ENCODE measurements at regions of chr18 and their contacts with region 1.

Region 1: DNA sequence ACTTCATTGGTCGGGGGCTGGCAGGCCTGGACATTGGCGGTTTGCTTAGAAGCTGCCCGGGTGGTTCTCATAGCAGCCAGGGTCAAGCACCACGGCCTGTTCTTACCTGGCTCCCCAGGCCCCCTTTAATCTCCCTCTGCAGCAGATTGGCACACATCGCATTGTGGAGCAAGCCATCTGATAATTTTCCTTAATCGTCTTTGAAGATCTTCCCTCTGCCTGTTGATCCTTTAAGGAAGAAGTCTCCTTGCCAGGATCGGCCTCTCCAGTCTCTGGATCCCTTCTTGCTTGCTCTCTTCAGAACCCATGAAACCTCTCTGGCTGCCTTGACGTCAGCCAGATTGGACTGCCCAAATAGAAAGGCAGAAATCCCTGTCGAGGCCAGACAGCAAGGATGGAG is 75.8 kb downstream of the NEDD4L start:
- DNase-seq: no peak
- H3K4me3 ChIP-seq: no peak overlapping the region
- H3K27ac ChIP-seq: peak overlapping the region; percentile 13 to 17
- H3K4me1 ChIP-seq: no peaks in the 10 kb centered on the region
- H3K27me3 ChIP-seq: no peaks in the 10 kb centered on the region
- CTCF ChIP-seq: no peak
- POLR2A ChIP-seq: no peak

Region 2: GRCh38 chr18:58043491-58044379 is 76.1 kb before region 1 on chr18 and contains the start of gene NEDD4L:
- intact Hi-C with region 1: loop called (anchors 2 kb)
- DNase-seq: peak; percentile 80 to 85
- H3K4me3 ChIP-seq: peak within 1 kb of the TSS; percentile 71 to 97 (median 85)
- H3K27ac ChIP-seq: peak within 1 kb of the TSS; percentile 90 to 91
- H3K4me1 ChIP-seq: no peaks in the 10 kb centered on the region
- H3K27me3 ChIP-seq: no peaks in the 10 kb centered on the region
- CTCF ChIP-seq: peak; percentile 77 to 90 (median 78)
- POLR2A ChIP-seq: no peak
- total RNA-seq, gene NEDD4L: 26.2 to 162 (median 106) TPM

Region 3: DNA sequence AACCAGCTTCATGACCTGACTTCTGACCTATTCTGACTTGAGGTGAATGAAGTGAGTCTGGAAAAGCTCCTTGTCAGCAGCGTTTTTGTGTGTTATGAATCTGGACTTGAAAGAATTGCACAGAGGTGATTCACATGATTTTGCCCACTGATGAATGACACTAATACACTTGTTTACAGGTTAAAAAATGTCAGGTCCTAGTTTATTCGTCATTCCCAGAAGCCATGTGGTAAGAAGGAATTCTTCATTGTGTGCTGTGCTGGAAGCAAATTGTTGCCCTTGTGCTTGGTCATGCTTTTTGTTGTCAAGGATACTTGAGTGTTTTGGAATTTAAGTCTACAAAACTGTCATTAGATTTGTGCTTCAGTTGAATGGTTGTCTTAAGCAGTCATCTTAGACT is 1035.3 kb after region 1 on chr18:
- intact Hi-C with region 1: no loop called
- DNase-seq: no peak
- H3K4me3 ChIP-seq: no peak overlapping the region
- H3K27ac ChIP-seq: no peak overlapping the region
- H3K4me1 ChIP-seq: no peaks in the 10 kb centered on the region
- H3K27me3 ChIP-seq: no peaks in the 10 kb centered on the region
- CTCF ChIP-seq: no peak
- POLR2A ChIP-seq: no peak